Sciatic nerve (tissue), 2 donors: ENCODE measurements at regions of chr13 and their contacts with region 1.

Region 1: DNA sequence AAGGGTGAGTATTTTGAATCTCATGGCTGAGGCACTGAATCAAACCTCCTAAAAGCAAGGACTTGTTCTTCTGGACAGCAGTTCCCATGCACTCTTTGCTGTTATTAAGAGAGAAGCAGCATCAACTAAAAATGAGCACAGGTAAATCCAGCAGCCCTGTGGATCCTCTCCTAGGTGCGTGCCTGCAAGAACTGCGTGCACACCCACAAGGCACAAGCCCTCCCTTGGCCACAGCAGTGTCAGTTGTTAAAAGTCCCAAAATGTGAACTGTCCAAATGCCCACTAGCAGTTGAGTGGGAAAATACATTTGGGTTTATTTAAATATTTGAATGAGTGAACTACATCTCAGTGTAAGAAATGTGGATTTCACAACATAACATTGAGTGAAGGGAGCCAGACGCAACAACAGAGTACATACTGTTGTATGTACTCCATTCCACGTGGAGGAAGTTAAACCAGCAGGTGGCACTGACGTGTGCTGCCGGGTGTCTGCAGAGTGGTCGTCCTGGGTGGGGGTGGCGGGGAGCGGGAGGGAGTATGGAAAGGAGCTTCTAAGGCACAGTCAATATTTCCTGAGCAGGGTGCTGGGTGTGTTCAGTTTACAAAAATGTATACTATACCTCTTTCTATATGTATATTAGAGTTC is 266.4 kb downstream of the NALCN start:
- DNase-seq: no peak
- ATAC-seq: peak; percentile 65

Region 2: DNA sequence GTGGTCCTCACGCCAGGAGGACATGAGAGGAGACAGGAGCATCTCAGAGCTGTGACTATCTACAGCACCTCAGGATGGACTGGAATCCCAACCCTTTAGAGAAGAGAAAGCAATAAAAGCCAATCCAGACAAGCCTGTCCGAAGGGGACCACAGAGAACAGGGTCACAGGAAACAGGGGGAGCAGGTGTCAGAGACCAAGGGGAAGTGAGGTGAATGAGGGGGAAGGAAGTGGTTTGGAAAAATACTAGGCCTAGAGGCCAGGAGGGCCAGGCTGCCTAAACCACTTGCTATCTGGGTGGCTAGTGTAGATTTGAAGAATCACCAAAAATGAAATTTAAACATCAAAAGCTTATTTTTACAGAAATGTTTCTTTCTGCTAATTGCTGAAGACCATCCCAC is 491.5 kb before region 1 on chr13:
- intact Hi-C with region 1: no loop called
- DNase-seq: no peak
- ATAC-seq: no peak

Region 3: GRCh38 chr13:101661839-101662238 is 512.0 kb after region 1 on chr13:
- intact Hi-C with region 1: no loop called
- DNase-seq: no peak
- ATAC-seq: no peak

Region 4: GRCh38 chr13:101757446-101758039 is 607.7 kb after region 1 on chr13:
- intact Hi-C with region 1: loop called (anchors 10 kb)
- DNase-seq: no peak
- ATAC-seq: peak; percentile 76

Region 5: GRCh38 chr13:102555917-102556553 is 1406.2 kb after region 1 on chr13:
- intact Hi-C with region 1: loop called (anchors 10 kb)
- DNase-seq: no peak
- ATAC-seq: no peak